Transverse colon (tissue), 4 donors: ENCODE measurements at regions of chr9 and their contacts with region 1.

Region 1: GRCh38 chr9:123349691-123350480 is 6.1 kb upstream of the CRB2 start:
- DNase-seq: peak; percentile 58
- H3K4me3 ChIP-seq: no peak overlapping the region
- H3K27ac ChIP-seq: no peak overlapping the region
- H3K4me1 ChIP-seq: peaks cover 0 to 8% (median 3%) of the 10 kb centered on the region in 4 donors
- H3K27me3 ChIP-seq: peaks cover 6% of the 10 kb centered on the region
- CTCF ChIP-seq: peak; percentile 90 to 98 (median 93)
- EP300 ChIP-seq: no peak
- POLR2A ChIP-seq: no peak

Region 2: DNA sequence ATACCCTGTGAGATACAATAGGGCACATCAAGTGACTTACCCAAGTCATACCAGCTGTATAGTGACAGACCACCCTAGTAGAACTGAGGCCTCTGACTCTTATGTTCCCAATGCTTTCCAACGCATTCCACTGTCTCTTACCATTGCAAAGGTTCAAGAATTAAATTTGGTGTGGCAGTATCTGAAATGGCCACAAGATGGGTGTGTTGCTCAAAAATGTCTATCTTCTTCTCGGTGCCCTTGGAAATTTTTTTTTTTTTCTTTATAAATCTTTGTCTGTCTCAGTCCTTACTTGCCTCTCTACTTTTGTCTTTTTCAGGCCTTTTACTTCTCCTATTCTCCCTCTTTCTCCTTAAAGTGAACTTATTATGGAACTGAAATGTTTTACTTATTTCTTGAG is 268.1 kb before region 1 on chr9:
- in situ Hi-C with region 1: loop called in 3 of 4 experiments (anchors 5 to 10 kb)
- intact Hi-C with region 1: no loop called
- DNase-seq: no peak
- H3K4me3 ChIP-seq: no peak overlapping the region
- H3K27ac ChIP-seq: no peak overlapping the region
- H3K4me1 ChIP-seq: no peaks in the 10 kb centered on the region
- H3K27me3 ChIP-seq: no peaks in the 10 kb centered on the region
- CTCF ChIP-seq: peak; percentile 39 to 60 (median 52)
- EP300 ChIP-seq: no peak
- POLR2A ChIP-seq: no peak

Region 3: GRCh38 chr9:123112015-123112975 is 237.6 kb before region 1 on chr9:
- in situ Hi-C with region 1: no loop called
- intact Hi-C with region 1: loop called (anchors 10 kb)
- DNase-seq: no peak
- H3K4me3 ChIP-seq: no peak overlapping the region
- H3K27ac ChIP-seq: peak overlapping the region in 2 of 4 donors; percentile 10 to 12
- H3K4me1 ChIP-seq: peaks cover 0 to 13% (median 2%) of the 10 kb centered on the region in 4 donors
- H3K27me3 ChIP-seq: no peaks in the 10 kb centered on the region
- CTCF ChIP-seq: no peak
- EP300 ChIP-seq: no peak
- POLR2A ChIP-seq: no peak

Region 4: GRCh38 chr9:123251741-123252140 is 98.1 kb before region 1 on chr9:
- in situ Hi-C with region 1: no loop called
- intact Hi-C with region 1: no loop called
- DNase-seq: peak; percentile 39
- H3K4me3 ChIP-seq: no peak overlapping the region
- H3K27ac ChIP-seq: peak overlapping the region in 1 of 4 donors; percentile 28
- H3K4me1 ChIP-seq: peaks cover 0 to 32% (median 8%) of the 10 kb centered on the region in 4 donors
- H3K27me3 ChIP-seq: no peaks in the 10 kb centered on the region
- CTCF ChIP-seq: no peak
- EP300 ChIP-seq: no peak
- POLR2A ChIP-seq: no peak

Region 5: DNA sequence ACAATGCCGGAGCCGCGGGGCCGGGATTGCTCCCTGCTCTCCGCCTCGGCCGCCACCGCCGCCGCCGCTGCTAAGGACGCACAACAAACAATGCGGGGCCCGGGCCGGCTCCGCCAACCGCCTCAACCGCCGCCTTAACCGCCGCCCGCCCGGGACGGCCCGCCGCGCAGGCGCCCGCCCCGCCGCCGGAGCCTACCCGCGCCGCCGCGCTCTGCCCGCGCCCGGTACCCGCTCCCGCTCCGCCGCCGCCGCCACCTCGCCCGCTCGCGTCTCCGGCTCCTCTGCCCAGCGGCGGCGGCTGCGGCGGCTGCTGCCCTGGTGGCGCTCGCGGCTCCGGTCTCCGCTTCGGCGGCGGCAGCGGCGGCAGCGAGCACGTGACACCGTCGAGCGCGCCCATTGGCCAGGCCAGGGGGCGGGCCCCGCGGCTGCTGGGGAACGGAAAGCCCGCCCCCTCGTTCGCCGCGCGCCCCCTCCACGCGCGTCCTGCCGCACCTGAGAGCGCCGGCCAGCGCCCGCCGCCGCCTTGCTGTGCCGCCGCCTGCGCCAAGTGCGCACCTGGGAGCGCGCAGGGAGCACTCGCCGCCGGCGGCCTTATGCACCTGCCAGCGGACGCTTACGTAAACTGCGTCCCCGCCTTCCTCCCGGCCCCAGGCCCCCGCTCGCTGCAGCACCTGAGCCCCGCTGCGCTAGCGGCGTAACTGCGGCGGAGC is 81.5 kb before region 1 on chr9 and contains the start of gene STRBP:
- in situ Hi-C with region 1: no loop called
- intact Hi-C with region 1: loop called (anchors 10 kb)
- DNase-seq: peak; percentile 94
- H3K4me3 ChIP-seq: peak within 1 kb of the TSS; percentile 74 to 94 (median 90)
- H3K27ac ChIP-seq: peak within 1 kb of the TSS; percentile 78 to 89 (median 84)
- H3K4me1 ChIP-seq: peaks cover 6 to 30% (median 20%) of the 10 kb centered on the region in 4 donors
- H3K27me3 ChIP-seq: no peaks in the 10 kb centered on the region
- CTCF ChIP-seq: peak in 1 of 5 experiments; percentile 16
- EP300 ChIP-seq: no peak
- POLR2A ChIP-seq: no peak
- total RNA-seq, gene STRBP: 19.1 to 50.3 (median 43.2) TPM

Region 6: DNA sequence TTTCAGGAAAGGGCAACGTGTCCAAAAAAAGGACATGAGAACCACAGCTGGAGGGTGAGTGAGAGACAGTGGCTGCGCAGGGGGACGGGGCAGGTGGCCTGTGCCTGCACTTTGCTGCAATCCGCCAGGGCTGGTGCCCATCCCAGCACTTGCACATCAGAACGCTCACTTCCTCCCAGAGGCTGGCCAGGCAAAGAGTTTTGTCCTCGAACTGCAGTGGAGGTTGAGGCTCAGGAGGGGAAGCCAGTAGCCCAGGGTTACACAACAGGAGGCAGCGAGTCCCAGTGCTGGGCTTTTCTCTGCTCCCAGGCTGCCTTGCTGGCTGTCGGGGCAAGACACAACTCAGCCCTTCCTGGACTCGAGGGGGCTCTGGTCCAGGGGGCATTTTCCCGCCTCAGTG is 39.2 kb after region 1 on chr9:
- in situ Hi-C with region 1: loop called in 1 of 4 experiments (anchors 5 kb)
- intact Hi-C with region 1: loop called (anchors 1 kb)
- DNase-seq: no peak
- H3K4me3 ChIP-seq: no peak overlapping the region
- H3K27ac ChIP-seq: no peak overlapping the region
- H3K4me1 ChIP-seq: no peaks in the 10 kb centered on the region
- H3K27me3 ChIP-seq: no peaks in the 10 kb centered on the region
- CTCF ChIP-seq: no peak
- EP300 ChIP-seq: no peak
- POLR2A ChIP-seq: no peak